ENCODE measurements at regions of chr1 and their contacts with region 1.

Region 1: DNA sequence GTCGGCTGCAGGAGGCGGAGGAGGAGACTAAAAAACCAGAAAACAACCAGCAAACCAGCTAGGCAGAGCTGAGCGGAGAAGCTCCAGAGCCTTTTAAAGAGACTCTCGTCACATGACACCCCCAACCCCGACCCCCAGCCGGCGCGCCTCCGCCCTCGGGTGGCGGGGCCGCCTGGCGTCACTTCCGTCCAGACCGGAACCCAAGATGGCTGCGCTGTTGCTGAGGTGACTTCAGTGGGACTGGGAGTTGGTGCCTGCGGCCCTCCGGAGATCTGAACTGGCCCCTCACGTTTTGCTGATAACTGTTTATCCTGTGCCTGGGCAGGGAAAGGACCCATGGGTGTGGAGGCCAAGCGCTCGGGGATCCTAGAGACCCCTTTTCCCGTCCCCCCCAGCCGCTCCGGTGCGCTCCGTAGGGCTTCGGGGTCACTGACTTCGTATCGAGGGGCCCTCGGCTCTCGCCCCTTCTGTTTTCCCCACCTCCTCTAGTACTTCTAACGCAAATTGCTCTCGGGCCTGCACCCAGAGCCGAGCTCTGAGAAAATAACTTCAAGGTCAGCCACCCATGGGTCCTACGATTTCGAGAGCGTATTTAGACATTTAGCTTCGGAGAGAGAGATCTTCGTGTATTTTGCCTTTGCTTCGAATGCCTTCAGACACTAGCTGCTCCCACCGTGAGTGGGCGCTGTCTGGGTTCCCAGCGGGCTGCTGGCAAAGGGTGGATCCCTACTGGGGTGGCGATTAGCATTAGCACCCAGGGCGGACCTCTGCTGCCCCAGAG is at the start of gene SDHC:
- DNase-seq: peak; percentile 83 to 95 (median 93)
- ATAC-seq: peak; percentile 99
- H3K4me3 ChIP-seq: peak within 1 kb of the TSS; percentile 72
- H3K4me3 Mint-ChIP-seq: peak within 1 kb of the TSS; percentile 91 to 99 (median 98)
- H3K27ac ChIP-seq: peak within 1 kb of the TSS; percentile 97
- H3K27ac Mint-ChIP-seq: peak within 1 kb of the TSS; percentile 98 to 100 (median 99)
- H3K4me1 ChIP-seq: peaks cover 0 to 15% of the 10 kb centered on the region in 2 donors
- H3K4me1 Mint-ChIP-seq: peaks cover 13 to 39% (median 31%) of the 10 kb centered on the region in 7 donors
- H3K27me3 ChIP-seq: no peaks in the 10 kb centered on the region
- H3K27me3 Mint-ChIP-seq: peaks cover 0 to 7% (median 0%) of the 10 kb centered on the region in 5 donors
- total RNA-seq, gene SDHC: 66.3 to 174 (median 106) TPM

Region 2: DNA sequence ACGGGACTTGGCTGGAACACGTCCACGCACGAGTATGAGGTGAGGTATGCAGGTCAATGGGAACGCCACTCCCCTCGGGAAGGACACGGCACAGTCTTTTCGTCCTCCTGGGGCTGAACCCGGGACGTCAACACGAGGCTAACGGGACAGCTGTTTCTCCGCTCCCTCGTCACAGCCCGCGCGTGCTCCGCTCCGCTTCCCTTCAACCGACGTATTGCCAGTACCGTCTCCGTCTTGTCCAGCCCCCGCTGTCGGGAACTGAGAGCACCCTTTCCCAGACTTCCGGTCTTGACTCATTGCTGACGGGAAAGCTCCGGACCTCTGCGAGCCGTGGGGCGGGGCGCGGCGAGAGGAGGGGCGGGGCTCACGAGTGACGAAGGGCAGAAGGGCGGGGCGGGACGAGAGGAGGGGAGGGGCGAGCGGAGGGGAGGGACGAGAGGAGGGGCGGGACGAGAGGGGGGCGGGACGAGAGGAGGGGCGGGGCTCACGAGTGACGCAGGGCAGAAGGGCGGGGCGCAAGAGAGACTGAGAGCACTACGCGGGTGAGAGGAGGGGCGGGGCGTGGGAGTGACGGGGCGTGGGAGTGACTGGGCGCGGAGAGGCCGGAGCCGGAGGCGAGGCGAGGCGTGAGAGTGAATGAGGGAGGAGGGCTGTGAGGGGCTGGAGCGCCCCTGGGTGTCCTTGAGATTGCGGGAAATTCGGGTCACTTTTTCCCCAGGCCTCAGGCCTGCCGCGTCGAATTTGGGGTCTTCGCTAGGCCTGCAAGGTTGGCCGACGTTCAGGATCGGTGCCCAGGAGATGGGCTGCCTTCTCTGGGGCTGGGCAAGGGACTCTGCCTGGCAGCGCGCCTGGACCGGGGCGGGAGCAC is 75.5 kb after region 1 on chr1:
- CTCF ChIA-PET with region 1: no interaction called
- POLR2A ChIA-PET with region 1: interaction called, 22 read pairs
- intact Hi-C with region 1: loop called (anchors 1 kb)
- DNase-seq: peak; percentile 85 to 96 (median 92)
- ATAC-seq: peak; percentile 97
- H3K4me3 ChIP-seq: peak overlapping the region; percentile 86
- H3K4me3 Mint-ChIP-seq: peak overlapping the region; percentile 88 to 95 (median 92)
- H3K27ac ChIP-seq: peak overlapping the region; percentile 93
- H3K27ac Mint-ChIP-seq: peak overlapping the region; percentile 93 to 99 (median 98)
- H3K4me1 ChIP-seq: peaks cover 3 to 4% of the 10 kb centered on the region in 2 donors
- H3K4me1 Mint-ChIP-seq: peaks cover 0 to 50% (median 28%) of the 10 kb centered on the region in 7 donors
- H3K27me3 ChIP-seq: no peaks in the 10 kb centered on the region
- H3K27me3 Mint-ChIP-seq: no peaks in the 10 kb centered on the region

Region 3: DNA sequence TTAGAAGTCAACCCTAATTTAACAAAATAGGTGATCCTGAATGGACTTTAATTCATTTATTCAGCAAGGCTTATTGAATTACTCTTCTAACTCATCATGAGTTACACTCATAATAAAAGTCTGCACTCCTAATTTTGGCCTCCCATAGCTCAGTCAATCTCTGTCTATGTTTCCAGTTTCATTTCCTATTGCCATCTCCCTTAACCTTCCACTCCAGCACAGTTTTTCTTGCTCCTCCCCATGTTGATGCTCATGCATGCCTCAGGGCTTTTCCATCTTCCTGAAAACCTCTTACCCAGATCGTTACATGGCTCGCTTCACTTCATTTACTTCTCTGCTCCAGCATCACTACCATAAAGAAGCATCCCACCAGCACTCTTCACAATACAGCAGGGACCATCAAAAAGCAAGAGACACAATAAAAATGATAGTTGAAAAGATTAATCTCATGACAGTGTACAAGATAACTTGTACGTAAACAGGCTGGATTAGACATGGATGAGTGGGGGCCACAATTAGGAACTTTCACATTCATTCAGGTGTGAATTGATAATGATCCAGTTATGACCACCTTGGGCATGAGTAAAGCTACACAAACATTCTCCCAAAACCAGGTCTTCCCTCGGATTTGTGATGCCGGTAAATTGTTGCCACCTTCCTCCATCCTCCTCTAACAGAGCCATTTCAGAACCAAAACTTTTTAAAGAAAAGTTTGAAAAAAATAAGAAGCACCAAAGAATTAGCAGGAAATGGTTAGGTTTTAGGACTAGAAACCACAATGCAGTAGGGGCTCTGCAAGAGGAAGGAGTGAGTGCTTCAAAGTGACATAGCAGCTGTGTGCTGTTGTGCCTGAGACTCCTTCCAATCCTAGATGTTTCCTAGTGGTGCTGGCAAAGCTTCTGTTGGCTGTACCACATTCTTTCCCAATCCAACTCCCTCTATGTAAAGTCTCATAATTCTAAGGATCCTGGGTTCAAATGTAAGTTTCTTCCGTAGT is 619.5 kb after region 1 on chr1:
- CTCF ChIA-PET with region 1: no interaction called
- POLR2A ChIA-PET with region 1: no interaction called
- intact Hi-C with region 1: no loop called
- DNase-seq: peak in 7 of 9 donors; percentile 31 to 73 (median 68)
- ATAC-seq: peak; percentile 91
- H3K4me3 ChIP-seq: peak overlapping the region; percentile 7
- H3K4me3 Mint-ChIP-seq: peak overlapping the region; percentile 51 to 80 (median 68)
- H3K27ac ChIP-seq: peak overlapping the region; percentile 46
- H3K27ac Mint-ChIP-seq: peak overlapping the region; percentile 44 to 95 (median 88)
- H3K4me1 ChIP-seq: peaks cover 25 to 51% of the 10 kb centered on the region in 2 donors
- H3K4me1 Mint-ChIP-seq: peaks cover 16 to 73% (median 33%) of the 10 kb centered on the region in 7 donors
- H3K27me3 ChIP-seq: no peaks in the 10 kb centered on the region
- H3K27me3 Mint-ChIP-seq: no peaks in the 10 kb centered on the region

Measured in naive thymus-derived CD4-positive, alpha-beta T cell (primary cell).